ENCODE measurements at regions of chr19 and their contacts with region 1.

Region 1: GRCh38 chr19:49502866-49503581 is 6.8 kb downstream of the RPS11 start:
- DNase-seq: peak; percentile 43
- H3K4me3 ChIP-seq: no peak overlapping the region
- H3K27ac ChIP-seq: no peak overlapping the region
- H3K4me1 ChIP-seq: peaks cover 10 to 26% (median 15%) of the 10 kb centered on the region in 4 donors
- H3K27me3 ChIP-seq: no peaks in the 10 kb centered on the region
- CTCF ChIP-seq: peak; percentile 55 to 82 (median 66)
- EP300 ChIP-seq: no peak
- POLR2A ChIP-seq: no peak

Region 2: GRCh38 chr19:49546825-49547565 is 44.0 kb after region 1 on chr19:
- in situ Hi-C with region 1: loop called in 1 of 4 experiments (anchors 5 kb)
- intact Hi-C with region 1: loop called (anchors 2 kb)
- DNase-seq: peak; percentile 81
- H3K4me3 ChIP-seq: peak overlapping the region in 1 of 4 donors; percentile 13
- H3K27ac ChIP-seq: peak overlapping the region; percentile 64 to 84 (median 70)
- H3K4me1 ChIP-seq: peaks cover 8 to 34% (median 23%) of the 10 kb centered on the region in 4 donors
- H3K27me3 ChIP-seq: no peaks in the 10 kb centered on the region
- CTCF ChIP-seq: peak; percentile 82 to 96 (median 88)
- EP300 ChIP-seq: no peak
- POLR2A ChIP-seq: no peak